Right lobe of liver (tissue), 6 donors: ENCODE measurements at regions of chr20 and their contacts with region 1.

Region 1: DNA sequence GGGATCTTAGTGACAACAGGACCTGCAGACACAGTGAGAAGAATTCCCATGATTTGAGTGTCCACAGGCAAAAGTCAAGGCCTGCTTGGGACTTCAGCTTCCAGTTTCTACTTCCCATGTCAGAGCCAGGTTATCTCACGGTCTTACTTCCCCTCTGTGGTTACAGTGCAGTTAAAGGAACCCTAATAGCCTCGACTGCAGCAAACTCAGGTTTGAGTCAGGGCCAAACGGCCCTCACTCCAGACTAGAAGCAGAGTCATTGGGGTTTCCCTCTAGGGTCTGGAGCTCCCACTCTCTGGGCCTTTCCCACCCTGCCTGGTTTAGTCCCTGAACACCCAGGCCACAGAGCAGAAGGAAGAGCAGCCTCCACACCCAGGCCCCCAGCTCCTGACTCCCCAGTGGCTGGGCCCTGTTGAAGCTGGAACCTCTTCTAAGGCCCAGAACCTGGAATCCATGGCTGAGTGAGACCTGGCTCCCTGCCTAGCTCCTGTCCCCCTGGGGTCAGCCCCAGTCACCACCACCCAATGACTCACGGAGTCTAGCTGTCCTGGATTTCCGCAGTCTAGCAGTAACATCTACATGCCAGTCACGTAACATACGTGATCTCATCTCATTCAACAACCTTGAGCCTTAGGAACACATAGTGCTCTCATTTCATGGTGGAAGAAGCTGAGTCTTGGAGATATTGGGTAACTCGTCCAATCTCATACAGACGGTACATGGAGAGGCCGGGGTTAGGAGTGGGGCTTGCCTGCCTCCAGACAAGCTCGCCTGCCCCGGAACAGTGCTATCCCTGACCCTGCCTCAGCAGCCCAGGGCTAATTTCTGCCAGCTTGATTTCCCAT is 9.2 kb upstream of the GHRH start:
- DNase-seq: peak in 1 of 3 donors; percentile 28
- ATAC-seq: peak; percentile 36 to 55 (median 42)
- H3K4me3 ChIP-seq: no peak overlapping the region
- H3K27ac ChIP-seq: peak overlapping the region in 1 of 3 donors; percentile 52
- H3K4me1 ChIP-seq: peaks cover 0 to 6% (median 0%) of the 10 kb centered on the region in 4 donors
- H3K27me3 ChIP-seq: no peaks in the 10 kb centered on the region
- CTCF ChIP-seq: no peak
- POLR2A ChIP-seq: no peak

Region 2: DNA sequence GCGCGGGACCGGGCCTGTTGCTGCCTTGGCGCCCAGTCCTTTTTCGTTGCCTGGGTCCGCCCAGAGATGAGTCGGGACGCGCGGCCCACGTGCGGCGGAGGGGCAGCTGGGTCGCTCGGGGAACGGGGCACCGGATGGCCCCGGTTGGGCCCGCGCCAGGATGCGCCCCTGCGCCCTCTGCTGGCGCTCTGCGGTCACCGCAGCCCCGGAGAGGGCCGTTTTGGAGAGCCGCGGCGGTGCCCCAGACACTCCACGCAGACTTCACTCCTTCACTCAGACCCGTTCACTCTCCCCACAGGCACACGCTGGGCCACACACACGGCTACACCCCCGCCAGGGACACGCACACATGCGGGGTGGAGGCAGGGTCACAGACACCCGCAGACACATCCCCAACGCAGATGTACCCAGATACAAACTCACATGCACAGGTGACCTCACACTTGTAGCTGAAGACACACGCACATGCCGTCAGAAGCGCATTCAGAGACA is 113.9 kb after region 1 on chr20:
- intact Hi-C with region 1: loop called (anchors 5 kb)
- DNase-seq: peak; percentile 68 to 76 (median 69)
- ATAC-seq: peak; percentile 73 to 85 (median 79)
- H3K4me3 ChIP-seq: peak overlapping the region; percentile 18 to 48 (median 38)
- H3K27ac ChIP-seq: no peak overlapping the region
- H3K4me1 ChIP-seq: peaks cover 0 to 20% (median 1%) of the 10 kb centered on the region in 4 donors
- H3K27me3 ChIP-seq: no peaks in the 10 kb centered on the region
- CTCF ChIP-seq: peak; percentile 86 to 94 (median 90)
- POLR2A ChIP-seq: no peak